ENCODE measurements at regions of chr7 and their contacts with region 1.

Region 1: DNA sequence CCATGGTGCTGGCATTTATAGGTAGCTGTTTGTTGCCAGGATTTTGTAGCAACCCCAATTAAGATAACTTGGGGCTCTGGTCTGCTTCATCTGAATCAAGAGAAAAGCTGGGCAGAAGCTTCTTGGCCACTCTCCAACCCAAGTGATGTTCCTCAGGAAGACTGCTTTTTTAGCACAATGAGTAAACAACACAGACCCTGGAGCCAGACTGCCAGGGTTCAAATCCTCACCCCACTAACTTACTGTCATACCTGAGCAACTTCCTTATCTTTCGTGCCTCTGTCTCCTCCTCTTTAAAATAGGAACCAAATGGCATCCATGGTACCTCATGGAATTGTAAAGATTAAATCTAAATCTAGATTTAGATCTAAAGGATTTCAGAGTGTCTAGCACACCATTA is 10.9 kb downstream of the KEL start:
- DNase-seq: no peak
- H3K4me3 ChIP-seq: no peak overlapping the region
- H3K27ac ChIP-seq: no peak overlapping the region
- H3K4me1 ChIP-seq: no peaks in the 10 kb centered on the region
- H3K27me3 ChIP-seq: no peaks in the 10 kb centered on the region
- CTCF ChIP-seq: no peak
- EP300 ChIP-seq: no peak
- POLR2A ChIP-seq: no peak
- RAD21 ChIP-seq: no peak

Region 2: DNA sequence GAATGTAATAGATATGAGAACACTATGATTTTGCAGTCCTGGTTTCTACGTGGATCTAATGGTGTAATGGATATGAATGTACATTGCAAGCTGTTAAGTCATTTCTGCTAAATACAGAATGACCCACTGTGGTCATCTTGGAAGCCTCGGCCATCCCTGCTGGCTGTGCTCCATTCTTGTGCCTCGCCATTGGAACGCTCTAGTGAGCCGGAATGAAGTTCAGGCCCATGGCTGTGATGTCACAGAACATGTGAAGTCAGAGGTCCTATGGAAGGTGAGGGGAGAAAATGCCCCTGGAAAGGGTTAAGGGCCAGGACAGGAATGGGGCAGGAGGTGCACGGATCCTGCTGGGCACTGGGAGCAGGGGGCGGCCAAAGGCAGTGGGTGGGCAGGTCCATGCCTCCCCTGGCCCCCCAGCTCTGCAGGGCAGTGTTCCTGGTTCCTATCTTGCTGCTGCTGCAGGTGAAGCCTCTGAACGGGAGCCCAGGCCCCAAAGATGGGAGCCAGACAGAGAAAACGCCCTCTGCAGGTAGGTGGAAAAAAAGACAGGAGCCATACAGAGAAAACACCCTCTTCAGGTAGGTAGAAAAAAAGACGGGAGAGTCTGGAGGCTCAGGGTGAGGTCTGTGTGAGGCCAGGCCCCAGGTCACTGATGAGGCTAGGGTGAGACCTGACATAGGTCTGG is 11.9 kb before region 1 on chr7 and contains the start of gene LLCFC1:
- CTCF ChIA-PET with region 1: interaction called, 12 read pairs
- POLR2A ChIA-PET with region 1: no interaction called
- DNase-seq: peak; percentile 19 to 71
- H3K4me3 ChIP-seq: no peak within 1 kb of the TSS
- H3K27ac ChIP-seq: no peak within 1 kb of the TSS
- H3K4me1 ChIP-seq: no peaks in the 10 kb centered on the region
- H3K27me3 ChIP-seq: no peaks in the 10 kb centered on the region; a peak in 1 of 7 replicates
- CTCF ChIP-seq: peak; percentile 55 to 97 (median 85)
- EP300 ChIP-seq: no peak
- POLR2A ChIP-seq: no peak
- RAD21 ChIP-seq: peak; percentile 55 to 71
- total RNA-seq, gene LLCFC1: not detected in 2 replicates

Region 3: GRCh38 chr7:142992464-142992863 is 41.2 kb after region 1 on chr7:
- CTCF ChIA-PET with region 1: no interaction called
- POLR2A ChIA-PET with region 1: no interaction called
- DNase-seq: no peak
- H3K4me3 ChIP-seq: no peak overlapping the region
- H3K27ac ChIP-seq: no peak overlapping the region
- H3K4me1 ChIP-seq: no peaks in the 10 kb centered on the region
- H3K27me3 ChIP-seq: no peaks in the 10 kb centered on the region
- CTCF ChIP-seq: no peak
- EP300 ChIP-seq: no peak
- POLR2A ChIP-seq: no peak
- RAD21 ChIP-seq: no peak

Region 4: DNA sequence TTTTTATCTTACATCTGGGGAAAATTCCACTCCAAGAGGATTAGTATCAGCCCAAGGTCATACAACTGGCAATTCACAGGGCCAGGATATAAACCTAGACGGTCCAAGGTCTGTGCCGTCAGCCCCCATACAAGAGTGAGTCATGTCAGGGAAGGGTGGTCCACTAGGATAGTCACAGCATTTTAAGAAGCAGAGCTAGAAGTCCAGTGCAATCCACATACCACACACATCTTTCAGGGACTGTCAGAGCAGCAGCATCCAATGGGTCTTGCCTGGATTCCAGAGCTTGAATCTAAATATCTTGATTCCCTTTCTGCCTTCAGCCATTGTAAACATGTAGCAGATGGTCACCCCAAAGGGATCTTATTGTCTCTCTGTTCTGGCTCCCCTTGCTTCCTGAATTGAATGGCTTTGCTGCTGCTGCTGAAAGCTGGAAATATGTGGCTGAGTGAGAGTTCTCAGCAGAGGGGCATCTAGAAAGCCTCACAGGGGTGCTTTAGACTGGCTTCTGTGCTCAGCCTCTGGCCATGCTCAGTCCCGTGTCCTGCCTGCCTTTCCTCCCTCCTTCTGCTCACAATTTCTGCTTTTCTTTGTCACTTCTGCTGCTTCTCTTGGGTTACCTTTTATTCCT is 91.0 kb after region 1 on chr7:
- CTCF ChIA-PET with region 1: no interaction called
- POLR2A ChIA-PET with region 1: no interaction called
- DNase-seq: no peak
- H3K4me3 ChIP-seq: no peak overlapping the region
- H3K27ac ChIP-seq: 0 out of 2 replicates have a peak overlapping the region, but pooled peaks have one; percentile 5
- H3K4me1 ChIP-seq: no peaks in the 10 kb centered on the region
- H3K27me3 ChIP-seq: no peaks in the 10 kb centered on the region
- CTCF ChIP-seq: no peak
- EP300 ChIP-seq: no peak
- POLR2A ChIP-seq: no peak
- RAD21 ChIP-seq: no peak